ENCODE measurements at regions of chr6 and their contacts with region 1.

Region 1: DNA sequence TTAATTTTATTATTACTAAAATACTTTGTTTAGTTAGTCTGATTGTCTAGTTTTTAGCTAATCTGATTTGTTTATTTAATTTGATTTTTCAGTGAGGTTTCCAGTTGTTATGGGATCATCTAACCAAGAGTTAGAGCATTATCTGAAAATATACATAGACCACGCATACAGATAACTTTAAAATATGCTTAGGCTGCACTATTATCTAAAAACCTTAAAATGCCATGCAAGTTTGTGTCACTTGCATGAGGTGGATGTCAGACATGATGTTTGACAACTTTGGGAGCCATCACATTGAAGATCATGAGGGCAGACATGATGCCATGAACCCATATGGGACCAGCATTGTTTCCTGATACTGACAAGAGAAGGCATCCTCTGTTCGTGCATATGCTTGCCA is 610.3 kb downstream of the KHDRBS2 start:
- DNase-seq: no peak
- ATAC-seq: no peak
- H3K4me3 ChIP-seq: no peak overlapping the region
- H3K27ac ChIP-seq: no peak overlapping the region
- H3K4me1 ChIP-seq: no peaks in the 10 kb centered on the region
- H3K27me3 ChIP-seq: no peaks in the 10 kb centered on the region
- CTCF ChIP-seq: no peak
- EP300 ChIP-seq: no peak
- POLR2A ChIP-seq: no peak
- RAD21 ChIP-seq: no peak

Region 2: DNA sequence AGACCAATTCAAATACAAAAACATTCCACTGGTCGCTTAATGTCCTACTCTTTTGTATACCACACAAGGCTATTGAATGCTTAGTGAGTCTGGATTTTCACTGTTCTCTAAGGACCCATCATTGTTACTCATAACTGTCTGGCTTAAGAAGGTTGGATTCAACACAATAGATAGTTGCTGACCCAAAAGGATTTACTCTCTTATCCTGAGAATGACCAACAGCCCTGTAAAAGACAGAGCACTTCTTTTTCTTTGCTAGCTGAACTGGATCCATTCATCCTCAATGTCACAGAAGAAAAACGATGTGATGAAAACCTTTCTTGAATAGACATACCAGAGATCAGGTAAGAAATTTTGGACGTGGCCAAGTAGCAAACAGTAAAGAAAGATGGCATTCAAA is 35.3 kb before region 1 on chr6:
- CTCF ChIA-PET with region 1: no interaction called
- POLR2A ChIA-PET with region 1: no interaction called
- in situ Hi-C with region 1: no loop called
- intact Hi-C with region 1: loop called (anchors 1 kb)
- DNase-seq: no peak
- ATAC-seq: no peak
- H3K4me3 ChIP-seq: no peak overlapping the region
- H3K27ac ChIP-seq: no peak overlapping the region
- H3K4me1 ChIP-seq: no peaks in the 10 kb centered on the region
- H3K27me3 ChIP-seq: no peaks in the 10 kb centered on the region
- CTCF ChIP-seq: no peak
- EP300 ChIP-seq: no peak
- POLR2A ChIP-seq: no peak
- RAD21 ChIP-seq: no peak

Region 3: GRCh38 chr6:61755739-61756138 is 80.0 kb after region 1 on chr6:
- CTCF ChIA-PET with region 1: no interaction called
- POLR2A ChIA-PET with region 1: no interaction called
- in situ Hi-C with region 1: no loop called
- intact Hi-C with region 1: no loop called
- DNase-seq: no peak
- ATAC-seq: no peak
- H3K4me3 ChIP-seq: no peak overlapping the region
- H3K27ac ChIP-seq: no peak overlapping the region
- H3K4me1 ChIP-seq: no peaks in the 10 kb centered on the region
- H3K27me3 ChIP-seq: no peaks in the 10 kb centered on the region
- CTCF ChIP-seq: no peak
- EP300 ChIP-seq: no peak
- POLR2A ChIP-seq: no peak
- RAD21 ChIP-seq: no peak

Region 4: GRCh38 chr6:61787998-61788397 is 112.3 kb after region 1 on chr6:
- CTCF ChIA-PET with region 1: no interaction called
- POLR2A ChIA-PET with region 1: no interaction called
- in situ Hi-C with region 1: no loop called
- intact Hi-C with region 1: no loop called
- DNase-seq: no peak
- ATAC-seq: no peak
- H3K4me3 ChIP-seq: no peak overlapping the region
- H3K27ac ChIP-seq: no peak overlapping the region
- H3K4me1 ChIP-seq: no peaks in the 10 kb centered on the region
- H3K27me3 ChIP-seq: no peaks in the 10 kb centered on the region; a peak in 1 of 5 replicates
- CTCF ChIP-seq: no peak
- EP300 ChIP-seq: no peak
- POLR2A ChIP-seq: no peak
- RAD21 ChIP-seq: no peak

Measured in HepG2 (cell line).